ENCODE measurements at regions of chr6 and their contacts with region 1.

Region 1: DNA sequence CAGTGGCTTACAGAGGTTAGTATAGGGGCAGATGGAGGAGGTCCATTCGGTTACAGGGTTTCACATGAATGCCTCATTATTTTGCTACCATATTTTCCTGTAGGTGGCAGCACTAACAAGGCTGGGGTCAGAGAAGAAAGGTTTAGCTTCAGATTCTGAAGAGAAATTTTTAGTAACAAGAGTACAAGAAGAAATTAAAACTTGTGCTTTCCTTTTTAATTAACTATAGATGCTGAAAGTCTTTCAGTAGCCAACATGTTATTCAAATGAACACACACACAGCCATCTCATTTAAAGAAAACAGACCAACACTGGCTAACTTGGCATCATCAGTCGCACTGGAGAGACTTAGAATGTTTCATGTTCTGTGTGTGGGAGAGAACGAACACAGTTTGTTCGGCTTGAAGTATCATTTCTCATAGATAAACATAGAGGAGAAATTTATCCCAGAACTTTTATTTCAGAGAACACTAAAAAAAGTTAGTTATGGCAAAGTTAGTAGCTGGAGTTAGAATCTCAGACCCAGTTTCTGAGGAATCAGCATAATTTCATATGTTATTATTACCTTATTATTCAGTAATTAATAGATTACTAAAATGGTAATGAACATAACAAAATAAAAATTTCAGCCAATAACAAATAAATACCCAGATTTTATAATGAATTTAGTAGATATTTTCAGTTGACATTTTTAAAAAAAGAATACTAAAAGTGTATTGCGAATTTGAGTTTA is 314.0 kb upstream of the RSPO3 start:
- DNase-seq: peak; percentile 77
- H3K4me3 ChIP-seq: no peak overlapping the region
- H3K27ac ChIP-seq: no peak overlapping the region
- H3K4me1 ChIP-seq: peaks cover 9% of the 10 kb centered on the region
- H3K27me3 ChIP-seq: no peaks in the 10 kb centered on the region
- CTCF ChIP-seq: peak; percentile 63 to 66
- POLR2A ChIP-seq: no peak

Region 2: DNA sequence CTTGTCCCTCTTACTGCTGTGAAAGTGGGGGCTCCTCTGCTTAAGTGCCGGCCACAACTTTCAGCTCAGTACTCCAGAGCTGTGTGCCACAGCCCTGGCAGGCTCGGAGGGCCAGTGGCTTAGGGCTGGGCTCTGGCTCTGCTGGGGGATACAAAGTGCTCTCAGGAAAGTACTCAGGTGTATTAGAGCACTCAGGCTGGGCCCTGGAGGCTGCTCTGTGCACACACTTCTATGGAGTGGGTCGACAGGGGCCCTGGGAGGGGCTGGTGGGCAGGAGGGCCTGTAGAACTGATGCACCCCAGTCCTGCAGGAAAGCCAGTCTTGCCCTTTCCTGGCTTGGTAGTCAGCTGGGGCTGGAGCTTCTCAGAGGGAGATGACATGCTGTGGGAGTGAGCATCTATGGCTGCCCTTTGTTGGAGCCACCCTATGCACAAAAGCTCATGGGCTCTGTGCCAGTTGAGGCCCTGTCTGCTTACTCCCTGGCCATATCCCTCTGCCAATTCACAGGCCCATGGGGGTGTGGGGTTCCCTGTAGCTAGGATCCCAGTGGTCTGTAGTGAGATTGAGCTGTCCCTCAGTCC is 442.6 kb before region 1 on chr6:
- CTCF ChIA-PET with region 1: no interaction called
- POLR2A ChIA-PET with region 1: no interaction called
- dilution Hi-C with region 1: no loop called
- intact Hi-C with region 1: loop called (anchors 5 kb)
- DNase-seq: no peak
- H3K4me3 ChIP-seq: no peak overlapping the region
- H3K27ac ChIP-seq: no peak overlapping the region
- H3K4me1 ChIP-seq: peaks cover 5% of the 10 kb centered on the region
- H3K27me3 ChIP-seq: no peaks in the 10 kb centered on the region
- CTCF ChIP-seq: no peak
- POLR2A ChIP-seq: no peak

Region 3: GRCh38 chr6:126890055-126890454 is 85.6 kb after region 1 on chr6:
- CTCF ChIA-PET with region 1: interaction called, 13 read pairs
- POLR2A ChIA-PET with region 1: no interaction called
- dilution Hi-C with region 1: no loop called
- intact Hi-C with region 1: loop called (anchors 1 kb)
- DNase-seq: peak; percentile 14
- H3K4me3 ChIP-seq: no peak overlapping the region
- H3K27ac ChIP-seq: peak overlapping the region; percentile 76
- H3K4me1 ChIP-seq: peaks cover 37% of the 10 kb centered on the region
- H3K27me3 ChIP-seq: no peaks in the 10 kb centered on the region
- CTCF ChIP-seq: no peak
- POLR2A ChIP-seq: no peak

Region 4: GRCh38 chr6:127051571-127052260 is 247.2 kb after region 1 on chr6:
- CTCF ChIA-PET with region 1: interaction called, 15 read pairs
- POLR2A ChIA-PET with region 1: no interaction called
- dilution Hi-C with region 1: no loop called
- intact Hi-C with region 1: loop called (anchors 1 kb)
- DNase-seq: no peak
- H3K4me3 ChIP-seq: no peak overlapping the region
- H3K27ac ChIP-seq: no peak overlapping the region
- H3K4me1 ChIP-seq: peaks cover 24% of the 10 kb centered on the region
- H3K27me3 ChIP-seq: no peaks in the 10 kb centered on the region
- CTCF ChIP-seq: no peak
- POLR2A ChIP-seq: no peak

Region 5: DNA sequence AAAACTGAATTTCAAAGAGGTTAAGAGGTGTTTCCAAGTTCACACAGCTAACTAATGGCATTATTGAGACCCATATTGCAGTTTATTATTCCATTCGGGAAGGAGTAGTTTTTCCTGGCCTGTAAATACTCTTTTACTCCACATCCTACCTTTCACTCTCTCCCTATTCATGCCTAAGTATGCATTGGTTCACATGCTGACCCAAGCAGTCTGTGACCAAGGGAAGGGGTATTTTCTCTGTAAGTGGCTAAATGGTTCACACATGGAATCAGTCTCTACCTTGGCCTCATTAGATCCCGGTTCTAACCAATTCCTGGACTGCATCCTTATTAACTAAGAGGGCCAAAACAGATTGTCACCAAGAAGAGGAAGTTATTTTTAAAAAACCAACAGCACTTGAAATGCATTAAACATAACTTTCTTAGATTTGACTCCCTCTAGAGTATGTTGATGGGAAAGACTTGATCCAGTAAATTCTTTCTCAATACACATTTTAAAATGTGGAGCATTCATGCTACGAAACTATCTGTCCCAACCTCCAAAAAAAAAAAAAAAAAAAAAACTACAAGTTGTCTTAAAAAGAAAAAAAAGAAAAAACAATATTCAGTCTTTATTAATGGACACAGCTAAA is 296.1 kb after region 1 on chr6:
- CTCF ChIA-PET with region 1: interaction called, 50 read pairs
- POLR2A ChIA-PET with region 1: no interaction called
- dilution Hi-C with region 1: no loop called
- intact Hi-C with region 1: loop called (anchors 1 kb)
- DNase-seq: peak; percentile 41
- H3K4me3 ChIP-seq: no peak overlapping the region
- H3K27ac ChIP-seq: no peak overlapping the region
- H3K4me1 ChIP-seq: no peaks in the 10 kb centered on the region
- H3K27me3 ChIP-seq: no peaks in the 10 kb centered on the region
- CTCF ChIP-seq: peak in 1 of 2 donors; percentile 32
- POLR2A ChIP-seq: no peak

Region 6: DNA sequence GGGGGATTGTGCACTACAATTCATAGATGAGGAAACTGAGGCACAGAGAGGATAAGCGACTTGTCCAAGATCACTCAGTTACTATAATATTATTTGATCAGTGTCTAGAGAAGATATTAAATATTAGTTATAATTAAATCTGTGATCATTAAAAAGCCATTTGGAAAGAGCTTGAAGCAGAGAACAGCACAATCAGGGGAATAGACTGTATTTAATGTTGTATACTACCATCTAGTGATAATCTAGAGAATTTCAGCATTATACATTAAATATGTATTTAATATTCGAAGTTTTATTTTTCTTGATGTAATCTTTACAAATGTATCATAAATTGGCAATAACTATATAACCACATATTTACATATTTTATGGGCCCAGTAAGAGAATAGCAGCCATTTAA is 734.8 kb after region 1 on chr6:
- CTCF ChIA-PET with region 1: no interaction called
- POLR2A ChIA-PET with region 1: no interaction called
- dilution Hi-C with region 1: no loop called
- intact Hi-C with region 1: no loop called
- DNase-seq: peak; percentile 26
- H3K4me3 ChIP-seq: no peak overlapping the region
- H3K27ac ChIP-seq: no peak overlapping the region
- H3K4me1 ChIP-seq: no peaks in the 10 kb centered on the region
- H3K27me3 ChIP-seq: peaks cover 12 to 17% of the 10 kb centered on the region in 2 experiments
- CTCF ChIP-seq: peak in 1 of 2 donors; percentile 3
- POLR2A ChIP-seq: no peak

Region 7: GRCh38 chr6:128403618-128404444 is 1599.3 kb after region 1 on chr6:
- CTCF ChIA-PET with region 1: no interaction called
- POLR2A ChIA-PET with region 1: no interaction called
- dilution Hi-C with region 1: no loop called
- intact Hi-C with region 1: no loop called
- DNase-seq: no peak
- H3K4me3 ChIP-seq: no peak overlapping the region
- H3K27ac ChIP-seq: no peak overlapping the region
- H3K4me1 ChIP-seq: no peaks in the 10 kb centered on the region
- H3K27me3 ChIP-seq: no peaks in the 10 kb centered on the region
- CTCF ChIP-seq: no peak
- POLR2A ChIP-seq: no peak